ENCODE measurements at regions of chr2 and their contacts with region 1.

Region 1: GRCh38 chr2:223944703-223945531 is at the start of gene WDFY1:
- DNase-seq: peak; percentile 74
- H3K4me3 Mint-ChIP-seq: peak within 1 kb of the TSS; percentile 87
- H3K27ac Mint-ChIP-seq: peak within 1 kb of the TSS; percentile 86
- H3K4me1 Mint-ChIP-seq: peaks cover 60% of the 10 kb centered on the region
- H3K27me3 Mint-ChIP-seq: no peaks in the 10 kb centered on the region
- total RNA-seq, gene WDFY1: 17.9 and 21.8 TPM in 2 replicates

Region 2: DNA sequence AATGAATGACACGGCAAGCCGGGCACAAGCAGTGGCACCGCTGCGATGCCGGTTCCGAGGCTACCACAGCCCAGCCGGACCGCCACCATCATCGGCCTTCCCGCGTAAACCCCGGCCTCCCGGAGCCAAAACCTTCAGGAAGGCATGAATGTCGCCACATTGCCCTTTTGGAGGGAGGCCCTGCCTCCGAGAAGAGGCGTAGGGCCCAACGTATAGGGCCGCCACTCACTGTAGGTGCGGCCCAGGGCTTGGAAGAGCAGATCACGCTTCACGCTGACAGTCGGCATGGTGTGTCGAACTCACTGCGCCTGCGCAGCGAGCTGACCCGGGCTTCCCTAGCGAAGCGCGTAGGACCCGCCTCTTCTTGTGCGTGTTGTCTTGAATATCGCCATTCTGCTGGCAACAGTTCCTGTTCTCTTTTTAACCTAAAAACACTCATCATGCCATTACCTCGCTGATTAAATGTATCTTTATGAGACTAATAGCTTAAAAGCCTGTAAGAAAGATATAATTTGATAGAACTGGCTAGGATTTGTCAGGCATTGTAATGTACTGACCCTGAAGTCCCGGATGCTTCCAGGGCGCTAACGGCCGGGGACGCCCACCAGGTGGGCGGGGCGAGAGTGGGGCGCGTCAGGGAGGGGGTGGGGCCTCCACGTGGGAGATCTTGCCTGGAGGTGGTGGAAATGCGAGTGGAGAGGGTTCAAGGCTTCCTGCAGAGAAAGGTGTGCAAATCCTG is 1289.0 kb before region 1 on chr2 and contains the start of gene FARSB:
- intact Hi-C with region 1: loop called (anchors 5 kb)
- DNase-seq: peak; percentile 90
- H3K4me3 Mint-ChIP-seq: peak within 1 kb of the TSS; percentile 95
- H3K27ac Mint-ChIP-seq: peak within 1 kb of the TSS; percentile 87
- H3K4me1 Mint-ChIP-seq: peaks cover 36% of the 10 kb centered on the region
- H3K27me3 Mint-ChIP-seq: no peaks in the 10 kb centered on the region
- total RNA-seq, gene FARSB: 48.9 and 53.4 TPM in 2 replicates

Region 3: GRCh38 chr2:223760838-223761502 is 183.9 kb before region 1 on chr2:
- intact Hi-C with region 1: loop called (anchors 1 kb)
- DNase-seq: peak; percentile 55
- H3K4me3 Mint-ChIP-seq: no peak overlapping the region
- H3K27ac Mint-ChIP-seq: peak overlapping the region; percentile 40
- H3K4me1 Mint-ChIP-seq: peaks cover 24% of the 10 kb centered on the region
- H3K27me3 Mint-ChIP-seq: no peaks in the 10 kb centered on the region

Region 4: DNA sequence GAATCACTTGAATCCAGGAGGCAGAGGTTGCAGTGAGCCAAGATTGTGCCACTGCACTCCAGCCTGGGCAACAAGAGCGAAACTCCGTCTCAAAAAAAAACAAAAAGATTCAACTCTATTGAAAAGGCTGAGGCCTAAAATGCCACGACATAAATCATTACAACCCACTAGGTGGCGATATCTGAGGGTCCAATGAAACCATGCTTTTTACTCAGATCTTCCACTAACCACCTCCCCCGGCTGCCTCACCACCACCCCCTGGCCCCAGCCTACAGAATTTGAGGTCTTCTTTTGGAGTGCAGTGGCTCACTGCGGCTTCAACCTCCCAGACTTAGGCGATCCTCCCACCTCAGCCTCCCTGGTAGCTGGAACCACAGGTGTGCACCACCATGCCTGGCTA is 165.0 kb before region 1 on chr2:
- intact Hi-C with region 1: no loop called
- DNase-seq: peak; percentile 9
- H3K4me3 Mint-ChIP-seq: no peak overlapping the region
- H3K27ac Mint-ChIP-seq: no peak overlapping the region
- H3K4me1 Mint-ChIP-seq: no peaks in the 10 kb centered on the region
- H3K27me3 Mint-ChIP-seq: no peaks in the 10 kb centered on the region

Region 5: GRCh38 chr2:223889229-223889628 is 55.7 kb before region 1 on chr2:
- intact Hi-C with region 1: loop called (anchors 2 kb)
- DNase-seq: no peak
- H3K4me3 Mint-ChIP-seq: no peak overlapping the region
- H3K27ac Mint-ChIP-seq: no peak overlapping the region
- H3K4me1 Mint-ChIP-seq: peaks cover 21% of the 10 kb centered on the region
- H3K27me3 Mint-ChIP-seq: no peaks in the 10 kb centered on the region

Region 6: DNA sequence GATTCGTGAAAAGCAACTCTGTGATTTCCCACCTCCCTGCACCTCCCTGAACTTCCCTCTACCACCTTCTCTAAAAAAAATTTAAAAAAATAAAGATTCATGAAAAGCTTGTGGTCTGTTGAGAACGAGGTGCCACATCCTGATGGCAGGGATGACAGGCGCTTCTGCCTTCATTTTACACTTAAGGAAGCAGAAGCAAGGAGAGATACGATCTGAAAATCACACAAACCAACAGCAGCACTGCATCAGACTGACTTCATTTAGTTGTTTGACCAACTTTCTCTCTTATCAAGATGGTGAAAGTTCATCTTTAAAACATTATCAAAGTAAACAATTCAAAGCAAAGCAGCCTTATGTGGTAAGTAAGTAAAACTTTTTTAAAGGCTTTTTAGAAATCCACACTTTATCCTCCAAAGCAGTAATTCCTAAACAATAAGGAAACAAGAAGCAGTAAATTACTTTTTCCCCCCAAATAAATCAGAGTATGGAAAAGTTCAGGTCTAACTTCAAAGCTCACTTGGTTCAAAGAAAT is 15.3 kb before region 1 on chr2:
- intact Hi-C with region 1: loop called (anchors 2 kb)
- DNase-seq: no peak
- H3K4me3 Mint-ChIP-seq: no peak overlapping the region
- H3K27ac Mint-ChIP-seq: peak overlapping the region; percentile 48
- H3K4me1 Mint-ChIP-seq: peaks cover 38% of the 10 kb centered on the region
- H3K27me3 Mint-ChIP-seq: no peaks in the 10 kb centered on the region

Region 7: DNA sequence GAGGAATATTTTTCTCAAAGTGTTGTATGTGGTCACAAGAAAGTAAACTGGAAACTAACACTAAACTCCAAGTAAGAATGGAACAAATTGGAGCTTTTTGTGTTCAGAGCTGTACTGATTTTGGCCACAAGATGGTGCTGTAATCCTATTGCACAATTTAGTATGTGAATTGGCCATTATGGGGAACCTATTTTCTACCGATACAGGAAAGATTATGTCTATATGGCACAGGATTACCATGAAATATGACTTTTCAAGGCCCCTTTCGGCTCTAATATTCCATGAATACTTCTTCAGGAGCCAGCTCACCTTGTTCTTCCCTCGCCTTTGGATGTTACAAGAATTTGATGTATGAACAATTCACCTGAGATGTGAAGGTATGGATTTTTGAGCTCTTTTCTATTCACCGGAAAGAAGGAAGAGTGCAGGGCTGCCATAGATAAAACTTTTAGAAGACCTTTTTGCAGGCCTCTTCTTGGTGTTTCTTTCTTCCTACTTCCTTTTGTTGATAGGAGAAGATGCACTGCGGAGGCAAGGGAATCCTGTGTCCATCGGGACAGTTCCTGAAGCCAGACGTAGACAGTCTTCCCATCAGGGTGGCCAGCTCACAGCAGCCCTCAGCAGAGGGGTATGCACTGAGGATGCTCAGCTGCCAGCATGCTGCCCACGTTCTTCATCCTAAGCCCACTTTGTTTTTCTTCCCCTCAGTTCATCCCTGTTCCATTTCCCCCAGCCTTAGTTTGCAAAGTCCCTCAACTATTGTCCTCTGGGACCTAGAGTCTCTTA is 25.6 kb after region 1 on chr2:
- intact Hi-C with region 1: loop called (anchors 1 kb)
- DNase-seq: peak; percentile 41
- H3K4me3 Mint-ChIP-seq: no peak overlapping the region
- H3K27ac Mint-ChIP-seq: no peak overlapping the region
- H3K4me1 Mint-ChIP-seq: peaks cover 8% of the 10 kb centered on the region
- H3K27me3 Mint-ChIP-seq: no peaks in the 10 kb centered on the region

Region 8: GRCh38 chr2:224927646-224928173 is 982.8 kb after region 1 on chr2:
- intact Hi-C with region 1: loop called (anchors 5 kb)
- DNase-seq: peak; percentile 64
- H3K4me3 Mint-ChIP-seq: peak overlapping the region; percentile 56
- H3K27ac Mint-ChIP-seq: peak overlapping the region; percentile 99
- H3K4me1 Mint-ChIP-seq: peaks cover 99% of the 10 kb centered on the region
- H3K27me3 Mint-ChIP-seq: no peaks in the 10 kb centered on the region